ENCODE measurements at regions of chr12 and their contacts with region 1.

Region 1: GRCh38 chr12:110888256-110888991 is 32.0 kb downstream of the MYL2 start:
- DNase-seq: no peak
- H3K4me3 Mint-ChIP-seq: no peak overlapping the region
- H3K27ac Mint-ChIP-seq: no peak overlapping the region
- H3K4me1 Mint-ChIP-seq: peaks cover 5% of the 10 kb centered on the region
- H3K27me3 Mint-ChIP-seq: peaks cover 6% of the 10 kb centered on the region

Region 2: DNA sequence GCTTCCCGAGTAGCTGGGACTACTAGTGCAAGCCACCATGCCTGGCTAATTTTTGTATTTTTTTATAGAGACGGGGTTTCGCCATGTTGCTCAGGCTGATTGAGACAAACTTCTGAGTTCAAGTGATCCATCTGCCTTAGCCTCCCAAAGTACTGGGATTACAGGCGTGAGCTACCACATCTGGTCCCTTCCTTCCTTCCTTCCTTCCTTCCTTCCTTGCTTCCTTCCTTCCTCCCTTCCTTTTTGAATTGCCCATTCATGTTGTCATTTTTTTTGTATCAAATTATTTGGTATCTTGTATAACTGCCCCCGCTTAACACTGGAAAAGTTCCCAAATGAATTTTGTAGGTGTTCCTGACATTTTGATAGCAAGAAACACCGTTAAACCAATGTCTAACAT is 374.6 kb before region 1 on chr12:
- intact Hi-C with region 1: loop called (anchors 5 kb)
- DNase-seq: no peak
- H3K4me3 Mint-ChIP-seq: no peak overlapping the region
- H3K27ac Mint-ChIP-seq: no peak overlapping the region
- H3K4me1 Mint-ChIP-seq: no peaks in the 10 kb centered on the region
- H3K27me3 Mint-ChIP-seq: peaks cover 19% of the 10 kb centered on the region

Region 3: GRCh38 chr12:110619534-110619953 is 268.9 kb before region 1 on chr12:
- intact Hi-C with region 1: loop called (anchors 5 kb)
- DNase-seq: no peak
- H3K4me3 Mint-ChIP-seq: peak overlapping the region; percentile 37
- H3K27ac Mint-ChIP-seq: peak overlapping the region; percentile 77
- H3K4me1 Mint-ChIP-seq: peaks cover 10% of the 10 kb centered on the region
- H3K27me3 Mint-ChIP-seq: peaks cover 4% of the 10 kb centered on the region

Region 4: DNA sequence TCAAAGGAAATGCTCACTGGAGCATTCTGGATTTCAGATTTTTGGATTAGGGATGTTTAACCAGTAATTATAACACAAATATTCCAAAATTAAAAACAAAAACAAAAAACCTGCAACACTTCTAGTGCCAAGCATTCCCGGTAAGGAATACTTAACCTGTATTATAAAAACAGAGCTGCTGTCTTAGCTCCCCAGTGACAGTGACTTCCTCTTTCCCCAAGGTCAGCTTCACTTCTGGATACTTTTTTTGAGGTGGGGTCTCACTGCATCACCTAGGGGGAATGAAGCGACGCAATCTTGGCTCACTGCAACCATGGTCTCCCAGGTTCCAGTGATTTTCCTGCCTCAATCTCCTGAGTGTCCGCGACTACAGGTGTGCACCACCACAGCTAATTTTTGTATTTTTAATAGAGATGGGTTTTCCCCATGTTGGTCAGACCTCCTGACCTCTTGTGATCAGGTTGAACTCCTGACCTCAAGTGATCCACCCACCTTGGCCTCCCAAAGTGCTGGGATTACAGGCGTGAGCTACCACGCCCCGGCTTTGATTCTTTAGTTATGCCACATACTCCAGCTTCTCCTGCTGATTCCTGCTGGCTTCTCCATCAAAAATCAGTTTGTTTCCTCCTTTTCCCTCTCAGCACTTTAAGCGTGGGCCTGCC is 161.6 kb before region 1 on chr12:
- intact Hi-C with region 1: loop called (anchors 5 kb)
- DNase-seq: no peak
- H3K4me3 Mint-ChIP-seq: no peak overlapping the region
- H3K27ac Mint-ChIP-seq: peak overlapping the region; percentile 25
- H3K4me1 Mint-ChIP-seq: peaks cover 62% of the 10 kb centered on the region
- H3K27me3 Mint-ChIP-seq: no peaks in the 10 kb centered on the region

Region 5: DNA sequence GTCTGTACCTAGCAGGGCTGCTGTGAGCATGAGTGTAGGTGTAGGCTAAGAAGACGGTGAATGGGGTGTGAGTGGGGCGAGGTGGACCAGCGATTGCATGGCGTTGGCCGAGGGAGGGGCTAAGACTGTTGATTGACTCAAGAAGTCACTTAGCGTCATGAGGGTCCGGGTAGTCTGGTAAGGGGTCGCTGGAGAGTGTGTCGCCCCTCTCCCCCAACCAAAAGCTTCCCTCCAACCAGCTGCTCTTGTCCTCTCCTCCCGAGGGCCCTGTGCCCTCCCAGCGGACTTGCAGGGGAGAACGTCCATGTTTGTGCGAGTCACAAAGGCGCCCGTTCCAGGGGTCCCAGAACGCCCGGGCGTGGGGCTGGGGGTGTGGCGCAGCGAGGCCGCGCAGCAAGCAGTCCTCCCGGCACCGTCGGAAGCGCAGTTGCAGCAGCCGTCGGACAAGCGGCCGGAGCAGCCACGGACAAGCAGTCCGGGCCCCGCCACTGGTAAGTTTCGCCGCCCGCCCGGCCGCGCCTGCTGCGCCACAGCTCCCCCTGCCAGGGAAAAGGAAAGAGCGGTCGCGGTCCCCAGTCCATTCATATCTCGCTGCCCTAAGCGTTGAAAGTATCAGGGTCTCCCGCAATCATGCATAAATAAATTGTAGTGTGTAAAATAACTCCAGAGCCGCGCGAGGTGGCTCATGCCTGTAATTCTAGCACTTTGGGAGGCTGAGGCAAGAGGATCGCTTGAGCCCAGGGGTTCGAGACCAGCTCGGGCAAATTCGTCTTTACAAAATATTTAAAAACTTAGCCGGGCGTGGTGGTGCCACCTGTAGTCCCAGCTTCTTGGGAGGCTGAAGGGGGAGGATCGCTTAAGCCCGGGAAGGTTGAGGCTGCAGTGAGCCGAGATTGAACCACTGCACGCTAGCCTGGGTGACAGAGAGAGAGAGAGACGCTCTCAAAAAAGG is 41.5 kb before region 1 on chr12 and contains the start of gene CCDC63:
- intact Hi-C with region 1: loop called (anchors 5 kb)
- DNase-seq: no peak
- H3K4me3 Mint-ChIP-seq: peak within 1 kb of the TSS; percentile 68
- H3K27ac Mint-ChIP-seq: no peak within 1 kb of the TSS
- H3K4me1 Mint-ChIP-seq: peaks cover 5% of the 10 kb centered on the region
- H3K27me3 Mint-ChIP-seq: peaks cover 34% of the 10 kb centered on the region
- total RNA-seq, gene CCDC63: not detected in 2 replicates

Region 6: GRCh38 chr12:111201036-111201435 is 312.6 kb after region 1 on chr12:
- intact Hi-C with region 1: no loop called
- DNase-seq: no peak
- H3K4me3 Mint-ChIP-seq: no peak overlapping the region
- H3K27ac Mint-ChIP-seq: no peak overlapping the region
- H3K4me1 Mint-ChIP-seq: no peaks in the 10 kb centered on the region
- H3K27me3 Mint-ChIP-seq: peaks cover 9% of the 10 kb centered on the region